ENCODE measurements at regions of chr4 and their contacts with region 1.

Region 1: DNA sequence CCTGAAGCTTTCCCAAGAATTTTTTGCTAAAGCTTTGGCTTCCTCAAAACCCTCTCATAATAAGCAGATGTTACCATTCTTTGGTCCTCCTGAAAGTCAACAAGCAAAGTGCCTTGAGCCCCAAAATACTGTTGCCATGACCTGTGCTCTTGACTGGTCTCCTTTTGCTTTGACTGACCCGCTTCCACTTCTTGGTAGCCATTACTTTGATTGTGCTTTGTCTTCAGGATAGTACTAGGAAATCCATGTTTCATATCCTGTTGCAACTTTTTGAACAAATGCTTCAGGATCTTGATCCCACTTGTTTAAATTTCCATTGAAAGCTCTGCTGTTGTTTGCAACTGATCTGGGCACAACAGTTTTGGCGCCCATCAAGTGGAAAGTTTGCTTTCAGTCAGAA is 6.9 kb upstream of the OTOP1 start:
- DNase-seq: no peak
- H3K4me3 ChIP-seq: no peak overlapping the region
- CTCF ChIP-seq: no peak
- POLR2A ChIP-seq: no peak

Region 2: DNA sequence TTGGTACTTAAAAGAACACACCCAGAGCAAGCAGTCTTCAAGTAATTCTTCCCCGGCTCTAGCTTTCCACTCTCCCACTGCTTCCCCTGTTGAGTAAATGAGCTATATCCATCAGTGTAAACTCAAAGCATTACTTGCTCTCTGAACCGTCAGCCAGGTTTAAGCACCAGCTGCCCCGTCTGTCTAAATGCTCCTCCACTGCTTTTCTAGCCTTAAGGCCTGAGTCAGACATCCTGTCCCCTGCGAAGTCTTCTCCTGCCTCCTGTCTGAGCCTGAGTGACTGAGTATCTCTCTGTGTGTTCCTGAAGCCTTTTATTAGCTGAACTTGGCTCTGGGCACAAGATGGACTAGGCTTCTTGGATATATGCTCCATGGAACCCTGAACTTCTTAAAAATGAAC is 1022.8 kb after region 1 on chr4:
- intact Hi-C with region 1: loop called (anchors 10 kb)
- DNase-seq: no peak
- H3K4me3 ChIP-seq: no peak overlapping the region
- CTCF ChIP-seq: no peak
- POLR2A ChIP-seq: no peak

Measured in lower leg skin (tissue), 4 donors.